Prostate gland (tissue), 2 donors: ENCODE measurements at regions of chr5 and their contacts with region 1.

Region 1: DNA sequence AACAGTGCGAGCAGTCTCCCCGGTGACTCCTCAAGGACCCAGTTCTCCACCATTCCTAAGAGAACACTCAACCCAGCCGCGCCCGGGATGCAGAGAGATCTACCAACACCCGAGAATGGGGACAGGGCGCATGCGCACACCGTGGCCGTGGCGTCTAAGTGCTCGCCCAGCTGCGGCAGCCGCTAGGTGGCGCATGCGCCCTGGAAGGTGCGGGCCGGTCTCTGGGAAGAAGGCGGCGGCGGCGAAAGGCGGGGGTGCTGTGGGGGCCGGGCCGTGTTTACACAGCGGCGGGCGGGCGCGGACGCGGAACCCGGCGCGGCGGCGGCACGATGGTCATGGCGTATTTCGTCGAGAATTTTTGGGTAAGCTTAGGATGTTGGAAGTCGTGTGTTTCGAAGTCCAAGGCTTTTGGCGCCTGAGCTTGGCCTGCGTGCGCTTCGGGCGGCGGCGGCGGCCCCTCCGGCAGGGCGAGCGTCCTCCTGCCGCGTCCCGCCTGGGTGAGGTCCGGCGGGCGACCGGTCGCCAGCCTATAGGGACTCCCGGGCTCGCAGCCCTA is at the start of gene FCHO2:
- DNase-seq: peak; percentile 98
- H3K4me3 ChIP-seq: peak within 1 kb of the TSS; percentile 80 to 88
- H3K27ac ChIP-seq: peak within 1 kb of the TSS; percentile 95 to 97
- H3K4me1 ChIP-seq: no peaks in the 10 kb centered on the region
- H3K27me3 ChIP-seq: no peaks in the 10 kb centered on the region
- CTCF ChIP-seq: peak; percentile 88 to 99 (median 94)
- POLR2A ChIP-seq: peak; percentile 84
- total RNA-seq, gene FCHO2: 18.8 to 24.6 TPM

Region 2: DNA sequence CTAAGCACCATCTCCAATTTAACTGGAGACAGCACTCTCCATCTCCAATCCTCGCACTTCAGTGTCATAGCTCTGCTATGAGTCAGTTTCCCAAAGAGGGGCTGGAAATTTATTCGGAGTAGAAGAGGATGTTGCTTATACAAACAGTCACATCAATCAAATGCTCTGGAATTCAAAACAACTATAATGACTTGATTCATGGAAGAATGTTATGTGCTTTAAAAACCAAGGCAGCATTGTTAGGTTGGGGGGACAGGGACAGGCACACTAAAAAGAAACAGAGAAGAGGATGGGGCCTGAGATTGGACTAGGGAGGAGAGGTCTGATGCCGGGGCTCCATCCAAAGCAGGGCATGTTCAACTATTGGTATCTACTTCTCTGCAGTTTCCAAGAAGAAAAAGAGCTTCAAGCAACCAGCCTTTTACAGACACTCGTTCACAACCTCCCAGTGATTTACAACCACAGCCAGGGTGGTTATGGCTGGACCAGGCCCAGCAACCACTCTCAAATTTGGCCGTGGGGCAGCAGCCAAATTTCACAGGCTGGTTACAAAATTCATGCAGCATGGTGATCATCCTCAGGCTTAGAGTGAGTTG is 331.1 kb before region 1 on chr5:
- intact Hi-C with region 1: no loop called
- DNase-seq: no peak
- H3K4me3 ChIP-seq: no peak overlapping the region
- H3K27ac ChIP-seq: no peak overlapping the region
- H3K4me1 ChIP-seq: no peaks in the 10 kb centered on the region
- H3K27me3 ChIP-seq: no peaks in the 10 kb centered on the region
- CTCF ChIP-seq: no peak
- POLR2A ChIP-seq: no peak

Region 3: GRCh38 chr5:72816311-72817145 is 139.3 kb before region 1 on chr5 and contains the start of gene TNPO1:
- intact Hi-C with region 1: loop called (anchors 10 kb)
- DNase-seq: peak; percentile 93
- H3K4me3 ChIP-seq: peak within 1 kb of the TSS; percentile 70 to 79
- H3K27ac ChIP-seq: peak within 1 kb of the TSS; percentile 94 to 96
- H3K4me1 ChIP-seq: no peaks in the 10 kb centered on the region
- H3K27me3 ChIP-seq: no peaks in the 10 kb centered on the region
- CTCF ChIP-seq: peak in 2 of 4 experiments; percentile 10 to 17
- POLR2A ChIP-seq: peak; percentile 99
- total RNA-seq, gene TNPO1: 107 to 113 TPM

Region 4: GRCh38 chr5:72847989-72848473 is 107.8 kb before region 1 on chr5:
- intact Hi-C with region 1: loop called (anchors 10 kb)
- DNase-seq: peak; percentile 91
- H3K4me3 ChIP-seq: peak overlapping the region; percentile 72 to 84
- H3K27ac ChIP-seq: peak overlapping the region; percentile 83 to 86
- H3K4me1 ChIP-seq: peaks cover 8% of the 10 kb centered on the region
- H3K27me3 ChIP-seq: no peaks in the 10 kb centered on the region
- CTCF ChIP-seq: peak in 2 of 4 experiments; percentile 25 to 28
- POLR2A ChIP-seq: peak; percentile 74

Region 5: GRCh38 chr5:73471654-73472053 is 515.8 kb after region 1 on chr5:
- intact Hi-C with region 1: no loop called
- DNase-seq: no peak
- H3K4me3 ChIP-seq: no peak overlapping the region
- H3K27ac ChIP-seq: no peak overlapping the region
- H3K4me1 ChIP-seq: no peaks in the 10 kb centered on the region
- H3K27me3 ChIP-seq: no peaks in the 10 kb centered on the region
- CTCF ChIP-seq: no peak
- POLR2A ChIP-seq: no peak